GM12878 (cell line): ENCODE measurements at regions of chr3 and their contacts with region 1.

Region 1: GRCh38 chr3:27721717-27722542 is at the start of gene EOMES:
- DNase-seq: no peak
- ATAC-seq: peak; percentile 65
- H3K4me3 ChIP-seq: peak within 1 kb of the TSS; percentile 44; the same call in 1 of the 2 replicates
- H3K27ac ChIP-seq: no peak within 1 kb of the TSS
- H3K4me1 ChIP-seq: no peaks in the 10 kb centered on the region
- H3K27me3 ChIP-seq: peaks cover 2 to 14% of the 10 kb centered on the region in 2 experiments
- CTCF ChIP-seq: peak; percentile 10 to 61 (median 52); a peak in 5 of 6 replicates
- EP300 ChIP-seq: no peak
- POLR2A ChIP-seq: no peak
- RAD21 ChIP-seq: no peak
- polyA plus RNA-seq, gene EOMES: 1.5 to 2.8 TPM

Region 2: GRCh38 chr3:27533718-27534573 is 188.0 kb before region 1 on chr3:
- CTCF ChIA-PET with region 1: no interaction called
- POLR2A ChIA-PET with region 1: no interaction called
- RAD21 ChIA-PET with region 1: no interaction called
- SMC1A ChIA-PET with region 1: no interaction called
- in situ Hi-C with region 1: no loop called
- intact Hi-C with region 1: no loop called
- DNase-seq: peak; percentile 48
- ATAC-seq: peak; percentile 69
- H3K4me3 ChIP-seq: no peak overlapping the region
- H3K27ac ChIP-seq: no peak overlapping the region
- H3K4me1 ChIP-seq: no peaks in the 10 kb centered on the region; the same call in 1 of the 2 replicates
- H3K27me3 ChIP-seq: no peaks in the 10 kb centered on the region
- CTCF ChIP-seq: no peak
- EP300 ChIP-seq: no peak
- POLR2A ChIP-seq: no peak
- RAD21 ChIP-seq: no peak

Region 3: DNA sequence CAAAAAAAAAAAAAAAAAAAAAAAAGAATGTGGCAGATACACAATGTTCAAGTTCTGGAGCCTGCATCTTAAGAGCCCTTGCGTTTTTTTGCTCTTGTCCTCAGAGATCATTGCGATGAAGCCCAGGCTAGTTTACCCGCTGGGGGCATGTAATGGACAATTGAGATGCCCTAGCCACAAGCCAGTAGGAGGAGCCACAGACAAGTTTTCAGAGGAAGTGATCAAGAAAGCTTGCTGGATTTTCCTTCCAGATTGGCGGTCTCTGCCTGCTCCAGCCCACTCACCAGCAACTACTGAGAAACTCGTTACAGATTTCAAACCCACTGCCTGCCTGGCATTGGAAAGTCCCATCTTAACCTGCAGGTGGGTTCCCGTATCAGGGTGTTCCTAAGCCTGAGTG is 192.3 kb after region 1 on chr3:
- CTCF ChIA-PET with region 1: interaction called, 3 read pairs
- POLR2A ChIA-PET with region 1: no interaction called
- RAD21 ChIA-PET with region 1: no interaction called
- SMC1A ChIA-PET with region 1: interaction called, 11 read pairs
- in situ Hi-C with region 1: no loop called
- intact Hi-C with region 1: no loop called
- DNase-seq: no peak
- ATAC-seq: peak; percentile 35
- H3K4me3 ChIP-seq: no peak overlapping the region
- H3K27ac ChIP-seq: no peak overlapping the region
- H3K4me1 ChIP-seq: no peaks in the 10 kb centered on the region
- H3K27me3 ChIP-seq: no peaks in the 10 kb centered on the region
- CTCF ChIP-seq: peak in 1 of 3 experiments; percentile 24; a peak in 2 of 6 replicates
- EP300 ChIP-seq: no peak
- POLR2A ChIP-seq: no peak
- RAD21 ChIP-seq: peak; percentile 32; the same call in 1 of the 2 replicates

Region 4: DNA sequence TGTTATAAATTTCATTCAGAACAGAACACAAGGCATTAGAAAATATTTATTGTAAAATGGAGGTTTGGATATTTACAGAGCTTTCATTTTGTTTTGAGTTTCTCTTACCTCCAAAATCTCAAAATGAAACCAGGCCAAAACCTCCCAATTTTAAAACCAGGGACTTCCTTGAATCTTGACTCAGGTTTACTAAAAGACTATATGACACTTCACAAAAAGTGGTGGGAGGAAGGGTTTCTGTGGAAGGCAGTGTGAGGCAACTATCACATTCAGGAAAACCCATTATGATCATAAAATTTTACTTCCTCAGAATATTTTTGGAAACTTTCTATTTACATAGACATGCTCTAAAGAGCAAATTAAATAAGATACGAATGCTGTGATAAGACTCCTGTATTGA is 206.0 kb after region 1 on chr3:
- CTCF ChIA-PET with region 1: interaction called, 8 read pairs
- POLR2A ChIA-PET with region 1: interaction called, 7 read pairs
- RAD21 ChIA-PET with region 1: interaction called, 5 read pairs
- SMC1A ChIA-PET with region 1: interaction called, 7 read pairs
- in situ Hi-C with region 1: no loop called
- intact Hi-C with region 1: loop called (anchors 5 kb)
- DNase-seq: peak; percentile 4
- ATAC-seq: peak; percentile 36
- H3K4me3 ChIP-seq: no peak overlapping the region
- H3K27ac ChIP-seq: no peak overlapping the region
- H3K4me1 ChIP-seq: no peaks in the 10 kb centered on the region
- H3K27me3 ChIP-seq: no peaks in the 10 kb centered on the region
- CTCF ChIP-seq: no peak
- EP300 ChIP-seq: no peak
- POLR2A ChIP-seq: no peak
- RAD21 ChIP-seq: no peak

Region 5: DNA sequence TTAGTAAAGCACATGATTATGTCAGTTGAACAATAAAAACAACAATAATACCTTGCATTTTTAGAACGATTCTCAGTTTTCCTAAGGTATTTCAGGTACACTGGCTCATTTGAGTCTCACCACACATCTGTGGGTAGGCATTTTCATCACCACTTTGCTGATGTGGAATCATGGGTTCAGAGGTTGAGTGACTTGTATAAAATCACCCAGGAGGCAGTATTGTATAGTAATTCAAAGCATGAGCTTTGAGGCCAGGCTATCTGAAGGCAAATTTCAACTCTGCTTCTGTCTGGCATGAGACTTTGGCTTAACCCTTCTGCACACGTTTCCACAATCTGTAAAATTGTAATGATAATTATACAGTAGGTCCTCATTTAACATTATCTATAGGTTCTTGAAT is 335.6 kb after region 1 on chr3:
- CTCF ChIA-PET with region 1: interaction called, 3 read pairs
- POLR2A ChIA-PET with region 1: interaction called, 3 read pairs
- RAD21 ChIA-PET with region 1: interaction called, 15 read pairs
- SMC1A ChIA-PET with region 1: interaction called, 4 read pairs
- in situ Hi-C with region 1: no loop called
- intact Hi-C with region 1: no loop called
- DNase-seq: no peak
- ATAC-seq: peak; percentile 41; the same call in 2 of the 3 replicates
- H3K4me3 ChIP-seq: no peak overlapping the region
- H3K27ac ChIP-seq: no peak overlapping the region
- H3K4me1 ChIP-seq: no peaks in the 10 kb centered on the region
- H3K27me3 ChIP-seq: no peaks in the 10 kb centered on the region
- CTCF ChIP-seq: no peak
- EP300 ChIP-seq: no peak
- POLR2A ChIP-seq: no peak
- RAD21 ChIP-seq: 0 out of 2 replicates have a peak, but pooled peaks have one; percentile 13

Region 6: DNA sequence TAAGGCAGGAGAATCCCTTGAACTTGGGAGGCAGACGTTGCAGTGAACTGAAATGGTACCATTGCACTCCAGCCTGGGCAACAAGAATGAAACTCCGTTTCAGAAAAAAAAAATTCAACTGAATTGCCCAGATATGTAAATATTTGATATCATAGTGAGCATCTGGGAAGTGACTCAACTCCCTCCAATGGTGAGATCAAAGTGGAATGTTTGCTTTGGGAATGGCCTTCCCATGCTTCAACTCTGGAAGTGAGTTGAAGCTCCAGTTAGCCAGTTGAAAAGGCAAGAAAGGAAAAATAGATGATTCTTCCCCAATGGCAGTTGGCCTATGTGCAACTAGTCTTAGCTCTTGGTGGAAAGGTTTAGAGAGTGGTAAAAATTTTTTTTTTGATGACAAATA is 387.9 kb after region 1 on chr3:
- CTCF ChIA-PET with region 1: no interaction called
- POLR2A ChIA-PET with region 1: interaction called, 12 read pairs
- RAD21 ChIA-PET with region 1: no interaction called
- SMC1A ChIA-PET with region 1: interaction called, 4 read pairs
- in situ Hi-C with region 1: no loop called
- intact Hi-C with region 1: no loop called
- DNase-seq: no peak
- ATAC-seq: no peak
- H3K4me3 ChIP-seq: no peak overlapping the region
- H3K27ac ChIP-seq: no peak overlapping the region
- H3K4me1 ChIP-seq: no peaks in the 10 kb centered on the region
- H3K27me3 ChIP-seq: no peaks in the 10 kb centered on the region
- CTCF ChIP-seq: no peak
- EP300 ChIP-seq: no peak
- POLR2A ChIP-seq: no peak
- RAD21 ChIP-seq: no peak

Region 7: DNA sequence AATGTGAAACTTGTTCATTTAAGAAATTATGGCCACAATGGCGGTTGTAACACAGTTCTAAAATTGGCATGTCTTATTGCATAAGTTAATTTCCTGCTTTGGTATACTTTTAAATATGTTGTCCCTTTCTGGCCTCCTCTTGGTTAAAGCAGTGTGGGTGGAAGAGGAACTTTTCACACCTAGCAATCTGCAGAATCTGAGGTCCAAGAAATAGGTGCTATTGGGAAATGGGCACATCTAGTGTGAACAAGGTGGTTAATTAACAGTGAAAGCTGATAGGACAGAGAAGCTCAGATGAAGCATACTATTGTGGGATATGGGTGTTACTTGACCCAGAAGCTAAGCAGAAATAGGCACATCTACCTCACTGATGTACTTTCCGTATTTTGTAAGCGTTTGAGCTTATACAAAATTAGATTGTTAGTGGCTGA is 530.1 kb after region 1 on chr3:
- CTCF ChIA-PET with region 1: interaction called, 3 read pairs
- POLR2A ChIA-PET with region 1: interaction called, 5 read pairs
- RAD21 ChIA-PET with region 1: interaction called, 13 read pairs
- SMC1A ChIA-PET with region 1: interaction called, 7 read pairs
- in situ Hi-C with region 1: no loop called
- intact Hi-C with region 1: no loop called
- DNase-seq: no peak
- ATAC-seq: peak; percentile 86
- H3K4me3 ChIP-seq: no peak overlapping the region
- H3K27ac ChIP-seq: no peak overlapping the region
- H3K4me1 ChIP-seq: no peaks in the 10 kb centered on the region; the same call in 1 of the 2 replicates
- H3K27me3 ChIP-seq: no peaks in the 10 kb centered on the region
- CTCF ChIP-seq: no peak
- EP300 ChIP-seq: peak in 1 of 2 experiments; percentile 46; a peak in 2 of 4 replicates
- POLR2A ChIP-seq: no peak
- RAD21 ChIP-seq: no peak

Region 8: GRCh38 chr3:28286595-28286994 is 564.7 kb after region 1 on chr3:
- CTCF ChIA-PET with region 1: interaction called, 35 read pairs
- POLR2A ChIA-PET with region 1: interaction called, 4 read pairs
- RAD21 ChIA-PET with region 1: interaction called, 53 read pairs
- SMC1A ChIA-PET with region 1: interaction called, 32 read pairs
- in situ Hi-C with region 1: no loop called
- intact Hi-C with region 1: no loop called
- DNase-seq: peak; percentile 8
- ATAC-seq: peak; percentile 96
- H3K4me3 ChIP-seq: no peak overlapping the region
- H3K27ac ChIP-seq: no peak overlapping the region
- H3K4me1 ChIP-seq: no peaks in the 10 kb centered on the region
- H3K27me3 ChIP-seq: no peaks in the 10 kb centered on the region
- CTCF ChIP-seq: peak; percentile 48 to 63 (median 50); a peak in 5 of 6 replicates
- EP300 ChIP-seq: no peak
- POLR2A ChIP-seq: no peak
- RAD21 ChIP-seq: peak; percentile 73